Left colon (tissue), 2 donors: ENCODE measurements at regions of chr1 and their contacts with region 1.

Region 1: DNA sequence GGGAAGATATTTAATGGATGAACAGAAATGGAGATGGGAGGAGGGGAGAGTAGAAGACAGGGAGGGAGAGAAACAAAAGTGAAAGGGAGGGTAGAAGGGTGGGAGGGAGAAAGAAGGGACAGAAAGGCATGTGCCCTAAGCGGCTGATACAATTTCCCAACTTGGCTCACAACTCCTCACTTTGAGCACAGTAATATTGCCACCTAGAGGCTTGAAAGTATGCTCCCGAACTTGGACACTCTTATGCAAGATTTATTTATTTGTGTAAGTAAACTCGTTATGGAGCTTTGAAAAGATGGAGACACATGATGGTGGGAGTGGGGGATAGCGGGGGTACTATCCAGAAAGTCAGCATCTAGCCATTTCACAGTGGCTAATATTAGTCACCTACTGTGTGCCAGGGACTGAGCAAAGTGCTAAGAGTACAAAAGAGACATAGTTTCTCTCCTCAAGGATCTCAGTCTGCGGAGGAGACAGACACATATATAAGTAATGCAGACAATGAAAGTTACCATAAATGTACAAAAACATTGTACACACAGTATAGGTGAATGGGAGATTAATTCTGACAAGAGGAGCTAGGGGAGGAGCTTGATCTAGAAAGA is 189.7 kb downstream of the SEC16B start:
- DNase-seq: no peak
- ATAC-seq: peak; percentile 77

Region 2: DNA sequence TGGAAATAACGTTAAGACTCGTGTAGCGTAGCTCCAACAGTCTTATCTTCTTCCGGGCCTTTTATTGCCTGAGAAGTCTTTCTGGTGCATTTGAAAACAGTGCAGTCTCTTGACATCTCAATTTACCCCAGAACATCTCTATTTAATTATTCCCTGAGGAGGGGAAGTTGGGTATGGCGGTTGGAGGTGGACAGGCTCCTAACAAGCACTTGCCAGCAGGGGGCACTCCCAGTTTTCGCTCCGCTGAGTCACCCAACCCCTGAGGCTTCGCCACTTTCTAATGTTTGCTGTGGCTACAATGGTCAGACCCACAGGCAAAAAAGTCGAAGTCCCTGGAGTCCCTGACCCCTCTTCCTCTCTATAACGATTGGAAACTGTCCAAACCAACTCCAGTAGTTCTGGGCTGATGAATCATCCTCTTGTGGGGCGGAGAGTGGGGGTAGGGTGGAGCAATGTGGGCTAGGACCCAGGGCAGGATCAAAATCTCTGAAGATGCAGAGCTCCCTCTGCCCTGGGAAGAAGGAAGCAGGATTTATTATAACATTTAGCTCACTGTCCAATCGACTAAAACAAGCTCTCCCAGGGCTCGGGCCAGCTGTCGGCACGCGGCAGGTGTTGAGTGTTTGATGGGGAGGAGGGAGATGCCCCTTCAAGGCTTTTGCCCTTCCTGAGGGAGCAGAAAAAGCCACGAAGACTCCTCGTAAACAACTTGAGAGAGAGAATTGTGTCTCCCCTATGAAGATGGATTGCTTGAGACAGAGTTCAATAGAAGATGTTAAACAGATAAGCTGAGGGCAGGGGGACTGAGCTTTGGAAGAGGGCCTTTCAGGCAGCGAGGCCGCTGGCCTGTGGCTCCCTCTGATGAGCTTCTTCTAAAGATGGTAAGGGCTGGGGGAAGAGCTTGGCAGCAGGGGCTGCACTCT is 523.8 kb before region 1 on chr1:
- intact Hi-C with region 1: loop called in 1 of 2 experiments (anchors 10 kb)
- DNase-seq: peak; percentile 26 to 49
- ATAC-seq: peak; percentile 49